GM12878 (cell line): ENCODE measurements at regions of chr9 and their contacts with region 1.

Region 1: GRCh38 chr9:3498691-3499090 is 27.1 kb downstream of the RFX3 start:
- DNase-seq: no peak
- ATAC-seq: peak; percentile 53
- H3K4me3 ChIP-seq: no peak overlapping the region
- H3K27ac ChIP-seq: no peak overlapping the region
- H3K4me1 ChIP-seq: peaks cover 2% of the 10 kb centered on the region; the same call in 1 of the 2 replicates
- H3K27me3 ChIP-seq: no peaks in the 10 kb centered on the region
- CTCF ChIP-seq: no peak
- EP300 ChIP-seq: no peak
- POLR2A ChIP-seq: no peak
- RAD21 ChIP-seq: no peak

Region 2: DNA sequence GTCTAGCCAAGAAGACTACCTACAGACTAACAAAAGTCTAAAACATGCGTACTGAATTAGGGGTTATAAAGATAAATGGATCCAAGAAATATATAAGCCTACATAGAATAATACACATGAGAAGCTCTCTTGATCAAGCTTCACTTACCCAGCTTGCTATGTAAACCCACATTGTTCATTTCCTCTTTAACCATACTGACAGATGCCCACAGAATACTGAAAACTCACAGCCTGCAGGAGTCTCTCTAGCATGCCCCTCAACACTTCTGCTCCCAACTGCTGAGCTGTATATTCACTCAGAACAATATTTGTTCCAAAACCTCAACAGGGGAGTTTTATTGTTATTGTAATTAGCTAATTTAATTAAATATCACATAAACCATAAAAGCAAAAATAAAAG is 25.3 kb before region 1 on chr9:
- CTCF ChIA-PET with region 1: interaction called, 10 read pairs
- POLR2A ChIA-PET with region 1: interaction called, 7 read pairs
- RAD21 ChIA-PET with region 1: interaction called, 14 read pairs
- SMC1A ChIA-PET with region 1: interaction called, 15 read pairs
- in situ Hi-C with region 1: no loop called
- intact Hi-C with region 1: no loop called
- DNase-seq: no peak
- ATAC-seq: peak; percentile 64
- H3K4me3 ChIP-seq: no peak overlapping the region
- H3K27ac ChIP-seq: peak overlapping the region; percentile 40
- H3K4me1 ChIP-seq: peaks cover 37% of the 10 kb centered on the region
- H3K27me3 ChIP-seq: no peaks in the 10 kb centered on the region
- CTCF ChIP-seq: peak in 1 of 3 experiments; percentile 32; a peak in 1 of 6 replicates
- EP300 ChIP-seq: no peak
- POLR2A ChIP-seq: no peak
- RAD21 ChIP-seq: peak; percentile 33; the same call in 1 of the 2 replicates

Region 3: GRCh38 chr9:3508521-3509291 is 10.0 kb after region 1 on chr9:
- CTCF ChIA-PET with region 1: no interaction called
- POLR2A ChIA-PET with region 1: interaction called, 9 read pairs
- RAD21 ChIA-PET with region 1: interaction called, 15 read pairs
- SMC1A ChIA-PET with region 1: interaction called, 14 read pairs
- in situ Hi-C with region 1: no loop called
- intact Hi-C with region 1: no loop called
- DNase-seq: no peak
- ATAC-seq: peak; percentile 74
- H3K4me3 ChIP-seq: peak overlapping the region; percentile 43
- H3K27ac ChIP-seq: peak overlapping the region; percentile 61
- H3K4me1 ChIP-seq: peaks cover 13% of the 10 kb centered on the region
- H3K27me3 ChIP-seq: no peaks in the 10 kb centered on the region
- CTCF ChIP-seq: no peak
- EP300 ChIP-seq: no peak
- POLR2A ChIP-seq: no peak
- RAD21 ChIP-seq: no peak